A549 (cell line): ENCODE measurements at regions of chr17 and their contacts with region 1.

Region 1: GRCh38 chr17:3845621-3846441 is at the start of gene NCBP3:
- DNase-seq: peak; percentile 97
- ATAC-seq: peak; percentile 92 to 98
- H3K4me3 ChIP-seq: peak within 1 kb of the TSS; percentile 93
- H3K27ac ChIP-seq: peak within 1 kb of the TSS; percentile 96 to 97
- H3K4me1 ChIP-seq: peaks cover 17% of the 10 kb centered on the region
- CTCF ChIP-seq: peak; percentile 95
- EP300 ChIP-seq: no peak
- POLR2A ChIP-seq: peak; percentile 92
- RAD21 ChIP-seq: peak; percentile 4 to 47; a peak in 3 of 5 replicates
- polyA plus RNA-seq, gene NCBP3: 27.7 and 32.7 TPM in 2 replicates

Region 2: GRCh38 chr17:3622977-3623594 is 222.7 kb before region 1 on chr17:
- CTCF ChIA-PET with region 1: no interaction called
- POLR2A ChIA-PET with region 1: no interaction called
- DNase-seq: no peak
- ATAC-seq: no peak; a peak in 1 of 6 replicates
- H3K4me3 ChIP-seq: no peak overlapping the region
- H3K27ac ChIP-seq: no peak overlapping the region
- H3K4me1 ChIP-seq: no peaks in the 10 kb centered on the region
- CTCF ChIP-seq: no peak
- EP300 ChIP-seq: no peak
- POLR2A ChIP-seq: no peak
- RAD21 ChIP-seq: no peak

Region 3: DNA sequence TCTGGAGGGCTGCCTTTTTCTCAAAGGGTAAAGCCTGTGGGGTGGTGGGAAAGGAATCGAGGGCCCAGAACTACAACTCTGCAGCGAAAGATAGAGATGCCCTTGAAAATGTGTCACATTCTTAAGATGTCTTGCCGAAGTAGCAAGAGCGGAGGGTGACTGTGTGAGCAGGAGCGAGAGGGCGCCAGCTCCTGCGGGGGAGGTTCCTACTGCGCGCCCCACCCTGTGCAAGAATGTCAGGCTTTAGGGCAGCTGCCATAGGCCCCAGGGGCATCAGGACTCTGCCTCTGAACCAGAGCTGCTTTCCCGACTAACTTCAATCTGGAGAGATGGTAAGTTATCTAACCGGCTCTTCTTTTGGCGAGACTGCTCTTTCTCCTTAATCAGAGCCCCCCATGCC is 33.1 kb before region 1 on chr17:
- CTCF ChIA-PET with region 1: interaction called, 49 read pairs
- POLR2A ChIA-PET with region 1: no interaction called
- DNase-seq: no peak
- ATAC-seq: no peak; a peak in 1 of 6 replicates
- H3K4me3 ChIP-seq: no peak overlapping the region
- H3K27ac ChIP-seq: no peak overlapping the region
- H3K4me1 ChIP-seq: 0 out of 3 replicates have a peak, but pooled peaks cover 4% of the 10 kb centered on the region
- CTCF ChIP-seq: no peak
- EP300 ChIP-seq: no peak
- POLR2A ChIP-seq: no peak
- RAD21 ChIP-seq: no peak

Region 4: GRCh38 chr17:3835410-3836229 is 10.2 kb before region 1 on chr17:
- CTCF ChIA-PET with region 1: interaction called, 89 read pairs
- POLR2A ChIA-PET with region 1: no interaction called
- DNase-seq: no peak
- ATAC-seq: peak in 1 of 2 experiments; percentile 13; a peak in 2 of 6 replicates
- H3K4me3 ChIP-seq: no peak overlapping the region
- H3K27ac ChIP-seq: no peak overlapping the region
- H3K4me1 ChIP-seq: no peaks in the 10 kb centered on the region
- CTCF ChIP-seq: no peak
- EP300 ChIP-seq: no peak
- POLR2A ChIP-seq: no peak
- RAD21 ChIP-seq: no peak

Region 5: DNA sequence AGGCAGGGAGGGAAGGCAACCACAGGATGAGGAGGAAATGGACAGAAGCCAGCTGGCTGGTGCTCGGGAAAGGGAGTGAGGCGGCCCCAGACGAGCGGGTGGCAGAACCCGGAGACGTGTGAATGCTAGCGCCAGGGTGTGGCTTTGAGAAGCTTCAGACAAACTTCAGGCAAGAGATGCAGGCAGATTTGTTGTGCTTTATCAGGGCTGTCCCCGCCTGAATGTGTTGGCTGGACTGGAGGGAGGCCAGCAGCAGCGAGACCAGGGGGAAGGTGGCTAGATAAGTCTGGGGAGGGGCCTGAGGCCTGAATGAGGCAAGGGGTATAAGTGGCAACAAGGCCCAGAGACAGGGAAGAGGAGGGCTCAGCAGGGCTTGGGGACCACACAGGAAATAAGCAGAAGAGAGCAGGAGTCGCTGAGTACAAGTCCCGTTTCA is 25.1 kb after region 1 on chr17:
- CTCF ChIA-PET with region 1: interaction called, 224 read pairs
- POLR2A ChIA-PET with region 1: no interaction called
- DNase-seq: no peak
- ATAC-seq: no peak
- H3K4me3 ChIP-seq: no peak overlapping the region
- H3K27ac ChIP-seq: no peak overlapping the region
- H3K4me1 ChIP-seq: no peaks in the 10 kb centered on the region
- CTCF ChIP-seq: no peak
- EP300 ChIP-seq: no peak
- POLR2A ChIP-seq: no peak
- RAD21 ChIP-seq: no peak

Region 6: GRCh38 chr17:3893003-3893719 is 47.3 kb after region 1 on chr17 and contains the start of gene CAMKK1:
- CTCF ChIA-PET with region 1: interaction called, 10 read pairs
- POLR2A ChIA-PET with region 1: interaction called, 10 read pairs
- DNase-seq: peak; percentile 86 to 98
- ATAC-seq: peak; percentile 57 to 78
- H3K4me3 ChIP-seq: peak within 1 kb of the TSS; percentile 79
- H3K27ac ChIP-seq: peak within 1 kb of the TSS; percentile 87 to 89
- H3K4me1 ChIP-seq: peaks cover 54% of the 10 kb centered on the region
- CTCF ChIP-seq: no peak
- EP300 ChIP-seq: no peak
- POLR2A ChIP-seq: peak; percentile 15; the same call in 1 of the 2 replicates
- RAD21 ChIP-seq: no peak
- polyA plus RNA-seq, gene CAMKK1: 6.9 and 7.7 TPM in 2 replicates

Region 7: DNA sequence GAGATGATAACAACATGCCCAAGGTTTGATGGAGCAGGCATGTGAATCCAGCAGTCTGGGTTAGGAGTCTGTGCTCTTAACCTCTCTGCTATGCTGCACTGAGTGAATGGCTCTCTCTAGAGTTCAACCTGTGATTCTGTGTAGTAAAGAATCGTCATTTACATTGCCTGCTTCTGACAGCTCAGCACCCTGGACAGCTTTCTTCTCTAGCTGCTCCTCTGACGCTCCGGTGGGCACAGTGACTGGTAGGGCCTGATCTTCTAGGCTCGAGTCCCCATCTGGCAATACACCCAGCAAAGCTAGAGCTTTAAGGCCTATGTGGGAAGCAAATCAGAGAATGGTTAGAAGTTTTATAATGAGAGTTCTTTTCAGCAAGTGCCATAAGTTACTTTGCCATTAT is 203.7 kb after region 1 on chr17:
- CTCF ChIA-PET with region 1: no interaction called
- POLR2A ChIA-PET with region 1: no interaction called
- DNase-seq: no peak
- ATAC-seq: peak in 1 of 2 experiments; percentile 20; a peak in 3 of 6 replicates
- H3K4me3 ChIP-seq: no peak overlapping the region
- H3K27ac ChIP-seq: no peak overlapping the region
- H3K4me1 ChIP-seq: no peaks in the 10 kb centered on the region
- CTCF ChIP-seq: no peak
- EP300 ChIP-seq: no peak
- POLR2A ChIP-seq: no peak
- RAD21 ChIP-seq: no peak

Region 8: DNA sequence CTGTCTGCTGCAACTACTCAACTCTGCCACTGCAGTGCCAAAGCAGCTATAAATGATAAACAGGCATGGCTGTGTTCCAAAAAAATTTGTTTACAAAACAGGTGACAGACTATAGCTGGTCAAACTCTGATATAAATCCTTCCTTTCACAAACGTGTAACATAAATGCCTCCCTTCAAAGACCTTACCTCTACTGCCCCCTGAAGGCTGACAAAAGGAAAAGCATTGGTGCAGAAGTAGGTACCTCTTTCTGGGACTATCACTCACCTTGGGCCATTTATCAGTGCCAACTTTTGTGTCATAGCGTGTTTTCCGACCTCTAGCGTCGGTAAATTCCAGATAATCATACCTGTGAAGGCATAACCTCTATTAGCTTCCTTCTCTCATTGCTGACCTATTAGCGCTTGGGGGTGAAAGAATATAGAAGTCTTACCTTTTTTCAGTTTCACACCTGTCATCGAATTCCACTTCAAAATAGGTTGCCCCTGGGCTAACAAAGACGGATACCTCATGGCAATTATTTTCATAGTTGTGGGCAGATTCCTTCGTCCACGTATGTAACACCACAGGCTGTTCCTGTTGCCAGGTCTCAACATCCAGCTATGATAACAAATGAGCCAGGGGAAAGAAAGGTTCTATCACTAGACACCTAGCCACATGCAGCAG is 229.1 kb after region 1 on chr17:
- CTCF ChIA-PET with region 1: interaction called, 34 read pairs
- POLR2A ChIA-PET with region 1: no interaction called
- DNase-seq: peak; percentile 56 to 66
- ATAC-seq: peak; percentile 86 to 89
- H3K4me3 ChIP-seq: no peak overlapping the region
- H3K27ac ChIP-seq: no peak overlapping the region
- H3K4me1 ChIP-seq: no peaks in the 10 kb centered on the region
- CTCF ChIP-seq: peak; percentile 69
- EP300 ChIP-seq: no peak
- POLR2A ChIP-seq: no peak
- RAD21 ChIP-seq: peak; percentile 66 to 75